Dorsolateral prefrontal cortex (tissue), 120 donors: ENCODE measurements at regions of chr17 and their contacts with region 1.

Region 1: DNA sequence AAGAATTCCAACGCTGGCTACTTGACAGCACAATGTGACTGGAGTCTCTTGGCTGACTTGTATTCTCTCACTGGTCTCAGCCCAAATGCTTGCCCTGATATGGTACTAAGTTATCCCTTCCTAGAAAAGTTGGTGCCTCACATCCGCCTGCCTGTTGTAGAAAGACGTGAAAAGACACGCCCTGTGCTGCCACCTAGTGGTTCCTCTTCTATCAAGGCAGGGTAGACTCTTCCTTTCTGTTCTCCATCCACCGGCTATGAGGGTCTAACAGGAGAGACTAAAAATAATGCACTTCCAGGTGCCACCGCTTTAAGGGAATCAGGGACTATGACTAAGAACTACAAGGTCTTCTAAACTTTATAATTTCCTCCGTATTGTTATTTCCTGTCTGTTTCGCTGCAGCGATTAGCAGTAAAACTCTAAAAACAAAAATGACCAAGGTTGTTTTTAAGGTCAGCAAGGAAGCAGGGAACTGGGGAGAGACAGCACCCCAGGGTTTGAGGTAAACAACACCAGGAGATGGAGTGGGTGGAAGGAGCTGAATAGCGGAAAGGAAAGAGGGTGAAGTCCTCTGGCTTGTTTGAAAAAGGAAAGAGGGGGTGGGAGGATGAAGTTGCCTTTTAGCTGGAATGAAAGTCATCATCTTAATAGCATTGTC is 109.5 kb downstream of the YPEL2 start:
- DNase-seq: peak; percentile 70 to 96 (median 90)
- H3K4me3 ChIP-seq: peak overlapping the region in 35 of 59 donors; percentile 1 to 51 (median 15)
- H3K27ac ChIP-seq: peak overlapping the region in 57 of 59 donors; percentile 9 to 90 (median 73)
- H3K27me3 ChIP-seq: no peaks in the 10 kb centered on the region
- CTCF ChIP-seq: peak; percentile 74 to 98 (median 93)

Region 2: GRCh38 chr17:58741121-58741625 is 699.7 kb before region 1 on chr17:
- intact Hi-C with region 1: no loop called
- DNase-seq: no peak
- H3K4me3 ChIP-seq: no peak overlapping the region
- H3K27ac ChIP-seq: no peak overlapping the region
- H3K27me3 ChIP-seq: no peaks in the 10 kb centered on the region
- CTCF ChIP-seq: no peak

Region 3: GRCh38 chr17:59415397-59415796 is 25.5 kb before region 1 on chr17:
- intact Hi-C with region 1: no loop called
- DNase-seq: no peak
- H3K4me3 ChIP-seq: no peak overlapping the region
- H3K27ac ChIP-seq: no peak overlapping the region
- H3K27me3 ChIP-seq: no peaks in the 10 kb centered on the region
- CTCF ChIP-seq: no peak

Region 4: DNA sequence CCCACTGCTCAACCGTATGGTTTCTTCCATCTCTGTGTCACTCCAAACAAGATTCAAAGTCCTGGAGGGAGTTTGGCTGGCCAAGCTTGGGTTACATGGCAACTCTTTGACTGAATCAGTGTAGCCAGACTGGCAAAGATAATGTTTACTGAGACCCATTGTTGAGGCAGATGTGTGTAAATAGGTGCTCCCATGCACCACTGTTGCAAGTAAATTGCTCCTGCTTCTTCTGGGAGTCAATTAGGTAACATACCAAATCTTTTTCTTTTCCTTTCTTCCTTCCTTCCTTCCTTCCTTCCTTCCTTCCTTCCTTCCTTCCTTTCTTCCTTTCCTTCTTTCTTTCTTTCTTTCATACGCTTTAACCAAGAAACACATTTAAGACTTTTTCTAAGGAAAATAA is 38.2 kb after region 1 on chr17:
- intact Hi-C with region 1: no loop called
- DNase-seq: no peak
- H3K4me3 ChIP-seq: no peak overlapping the region
- H3K27ac ChIP-seq: no peak overlapping the region
- H3K27me3 ChIP-seq: no peaks in the 10 kb centered on the region
- CTCF ChIP-seq: no peak

Region 5: GRCh38 chr17:59521204-59522126 is 80.6 kb after region 1 on chr17:
- intact Hi-C with region 1: loop called in 1 of 2 experiments (anchors 10 kb)
- DNase-seq: peak in 5 of 10 donors; percentile 27 to 56 (median 30)
- H3K4me3 ChIP-seq: no peak overlapping the region
- H3K27ac ChIP-seq: peak overlapping the region in 1 of 59 donors; percentile 11
- H3K27me3 ChIP-seq: no peaks in the 10 kb centered on the region
- CTCF ChIP-seq: peak; percentile 56 to 91 (median 83)

Region 6: DNA sequence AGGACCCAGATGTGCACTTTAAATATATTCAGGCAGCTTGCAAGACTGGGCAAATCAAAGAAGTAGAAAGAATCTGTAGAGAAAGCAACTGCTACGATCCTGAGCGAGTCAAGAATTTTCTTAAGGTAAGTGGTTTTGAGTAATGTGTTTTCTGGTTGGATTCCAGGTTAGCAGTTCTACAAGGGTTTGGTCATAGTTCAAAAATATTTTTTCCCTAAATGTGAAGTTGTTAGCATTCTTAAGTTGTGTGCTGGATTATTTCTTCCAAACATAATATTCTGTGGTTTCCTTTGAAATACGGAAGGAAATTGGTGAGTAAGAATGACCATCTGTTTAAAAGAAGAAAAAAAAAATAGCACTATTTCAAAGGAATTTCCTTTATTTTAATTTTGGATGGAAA is 227.9 kb after region 1 on chr17:
- intact Hi-C with region 1: no loop called
- DNase-seq: no peak
- H3K4me3 ChIP-seq: no peak overlapping the region
- H3K27ac ChIP-seq: peak overlapping the region in 36 of 59 donors; percentile 4 to 71 (median 32)
- H3K27me3 ChIP-seq: no peaks in the 10 kb centered on the region
- CTCF ChIP-seq: no peak